Activated T-helper 1 cell treated with anti-CD3 and anti-CD28 coated beads, Interleukin-12 subunit alpha, Interleukin-12 subunit beta, Interleukin-2, Interleukin-4 antibody, amounts not matched to agents 30 ng/mL and 10 ng/mL and 1 ng/mL, durations not matched to agents 14 hours and 24 hours and 36 hours (primary cell): ENCODE measurements at regions of chr3 and their contacts with region 1.

Region 1: GRCh38 chr3:187319699-187320302 is 28.3 kb upstream of the MASP1 start:
- DNase-seq: peak; percentile 37
- H3K4me3 Mint-ChIP-seq: no peak overlapping the region
- H3K27ac Mint-ChIP-seq: no peak overlapping the region
- H3K4me1 Mint-ChIP-seq: peaks cover 9% of the 10 kb centered on the region
- H3K27me3 Mint-ChIP-seq: peaks cover 13% of the 10 kb centered on the region

Region 2: GRCh38 chr3:187368251-187369088 is 48.7 kb after region 1 on chr3 and contains the start of gene RTP4:
- intact Hi-C with region 1: loop called (anchors 1 kb)
- DNase-seq: peak; percentile 55
- H3K4me3 Mint-ChIP-seq: peak within 1 kb of the TSS; percentile 90
- H3K27ac Mint-ChIP-seq: peak within 1 kb of the TSS; percentile 98
- H3K4me1 Mint-ChIP-seq: peaks cover 42% of the 10 kb centered on the region
- H3K27me3 Mint-ChIP-seq: no peaks in the 10 kb centered on the region
- total RNA-seq, gene RTP4: 3.4 and 4.0 TPM in 2 replicates

Region 3: DNA sequence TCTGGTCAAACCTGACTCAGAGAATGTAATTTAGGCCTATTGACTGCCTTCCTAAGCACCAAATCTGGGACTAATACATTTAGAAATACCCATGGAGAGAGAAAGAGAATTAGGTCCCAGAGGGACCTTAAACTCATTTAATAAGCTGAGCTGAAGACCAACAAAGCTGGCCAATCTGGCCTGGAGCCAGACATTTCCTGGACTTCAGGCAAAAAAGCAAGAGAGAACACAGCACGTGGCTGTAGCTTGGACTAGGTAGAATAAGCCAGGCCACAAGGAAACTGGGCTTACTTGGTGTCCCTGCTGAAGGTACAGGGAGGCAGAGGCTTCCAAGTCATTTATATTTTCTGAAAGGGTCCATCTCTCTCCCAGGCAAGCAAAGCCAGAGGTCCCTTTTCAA is 136.4 kb after region 1 on chr3:
- intact Hi-C with region 1: loop called (anchors 5 kb)
- DNase-seq: no peak
- H3K4me3 Mint-ChIP-seq: no peak overlapping the region
- H3K27ac Mint-ChIP-seq: no peak overlapping the region
- H3K4me1 Mint-ChIP-seq: no peaks in the 10 kb centered on the region
- H3K27me3 Mint-ChIP-seq: peaks cover 14% of the 10 kb centered on the region

Region 4: GRCh38 chr3:187533797-187534196 is 214.0 kb after region 1 on chr3:
- intact Hi-C with region 1: loop called (anchors 10 kb)
- DNase-seq: no peak
- H3K4me3 Mint-ChIP-seq: no peak overlapping the region
- H3K27ac Mint-ChIP-seq: no peak overlapping the region
- H3K4me1 Mint-ChIP-seq: no peaks in the 10 kb centered on the region
- H3K27me3 Mint-ChIP-seq: peaks cover 10% of the 10 kb centered on the region

Region 5: DNA sequence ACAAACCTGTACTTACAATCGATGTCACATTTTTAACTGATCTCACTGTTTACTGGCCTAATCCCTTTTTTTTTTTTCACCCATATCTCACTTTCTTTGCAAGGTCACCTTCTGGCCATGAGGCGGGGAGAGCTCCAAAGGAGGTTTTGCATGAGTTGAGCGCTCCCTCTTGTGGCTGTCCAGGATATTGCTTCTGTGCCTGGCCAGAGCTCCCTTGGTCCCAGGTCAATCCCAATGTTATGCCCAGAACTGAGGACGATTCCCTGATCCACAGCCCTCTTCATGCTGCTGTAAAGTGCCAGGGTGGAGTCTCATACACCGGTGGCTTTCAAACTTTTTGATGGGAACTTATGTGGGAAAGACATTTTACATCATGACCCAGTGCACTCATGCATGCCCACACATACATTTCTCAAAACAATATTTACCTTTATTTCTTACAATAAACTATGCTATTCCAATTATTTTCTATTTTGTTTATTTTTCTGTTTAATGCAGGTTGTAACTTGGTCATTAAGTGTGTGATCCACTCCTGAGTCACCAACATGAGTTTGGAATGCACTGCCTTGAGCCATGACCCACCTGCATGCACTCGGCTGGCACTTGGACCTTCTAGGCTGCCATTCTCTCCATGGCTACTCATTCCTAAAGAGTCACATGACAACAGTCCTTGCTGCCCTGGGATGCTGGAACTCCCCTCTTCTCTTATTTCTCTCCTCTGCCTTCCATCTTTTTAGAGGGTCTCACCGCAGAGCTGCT is 360.0 kb after region 1 on chr3:
- intact Hi-C with region 1: loop called (anchors 1 kb)
- DNase-seq: peak; percentile 40
- H3K4me3 Mint-ChIP-seq: no peak overlapping the region
- H3K27ac Mint-ChIP-seq: no peak overlapping the region
- H3K4me1 Mint-ChIP-seq: peaks cover 14% of the 10 kb centered on the region
- H3K27me3 Mint-ChIP-seq: peaks cover 27% of the 10 kb centered on the region

Region 6: DNA sequence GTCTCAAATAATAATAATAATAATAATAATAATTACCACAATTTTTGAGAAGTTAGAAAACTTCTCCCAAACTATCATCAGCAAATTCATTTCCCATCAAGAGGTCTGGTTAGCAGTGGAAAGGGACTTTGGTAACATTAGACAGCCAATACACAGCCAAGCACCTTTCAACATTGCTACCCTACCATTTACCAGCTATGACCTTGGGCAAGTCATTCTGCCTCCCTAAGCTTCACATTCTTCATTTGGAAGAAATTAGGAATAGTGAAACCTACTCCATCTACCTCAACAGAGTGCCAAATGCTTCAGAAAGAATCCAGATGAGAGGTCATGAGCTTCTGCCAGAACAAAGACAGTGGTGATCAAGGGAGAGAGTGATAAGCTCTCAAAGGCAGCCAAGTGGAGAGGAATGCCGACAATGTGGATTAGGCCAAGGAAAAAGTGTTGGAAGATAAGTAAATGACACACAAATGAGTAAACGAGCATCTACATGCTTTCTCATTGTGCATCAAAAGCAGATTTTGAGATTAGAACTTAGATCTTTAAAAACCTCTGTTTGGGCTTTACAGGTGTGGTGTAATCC is 791.3 kb after region 1 on chr3:
- intact Hi-C with region 1: no loop called
- DNase-seq: no peak
- H3K4me3 Mint-ChIP-seq: no peak overlapping the region
- H3K27ac Mint-ChIP-seq: no peak overlapping the region
- H3K4me1 Mint-ChIP-seq: peaks cover 6% of the 10 kb centered on the region
- H3K27me3 Mint-ChIP-seq: peaks cover 3% of the 10 kb centered on the region

Region 7: GRCh38 chr3:189148081-189148507 is 1828.3 kb after region 1 on chr3:
- intact Hi-C with region 1: loop called (anchors 2 kb)
- DNase-seq: peak; percentile 43
- H3K4me3 Mint-ChIP-seq: no peak overlapping the region
- H3K27ac Mint-ChIP-seq: no peak overlapping the region
- H3K4me1 Mint-ChIP-seq: peaks cover 47% of the 10 kb centered on the region
- H3K27me3 Mint-ChIP-seq: peaks cover 6% of the 10 kb centered on the region